Activated CD4-positive, alpha-beta memory T cell treated with anti-CD3 and anti-CD28 coated beads for 36 hours (primary cell): ENCODE measurements at regions of chr14 and their contacts with region 1.

Region 1: GRCh38 chr14:24058260-24058950 is 6.6 kb downstream of the CARMIL3 start:
- DNase-seq: peak; percentile 83
- H3K4me3 Mint-ChIP-seq: no peak overlapping the region
- H3K27ac Mint-ChIP-seq: peak overlapping the region; percentile 4
- H3K4me1 Mint-ChIP-seq: peaks cover 7% of the 10 kb centered on the region
- H3K27me3 Mint-ChIP-seq: peaks cover 4% of the 10 kb centered on the region

Region 2: DNA sequence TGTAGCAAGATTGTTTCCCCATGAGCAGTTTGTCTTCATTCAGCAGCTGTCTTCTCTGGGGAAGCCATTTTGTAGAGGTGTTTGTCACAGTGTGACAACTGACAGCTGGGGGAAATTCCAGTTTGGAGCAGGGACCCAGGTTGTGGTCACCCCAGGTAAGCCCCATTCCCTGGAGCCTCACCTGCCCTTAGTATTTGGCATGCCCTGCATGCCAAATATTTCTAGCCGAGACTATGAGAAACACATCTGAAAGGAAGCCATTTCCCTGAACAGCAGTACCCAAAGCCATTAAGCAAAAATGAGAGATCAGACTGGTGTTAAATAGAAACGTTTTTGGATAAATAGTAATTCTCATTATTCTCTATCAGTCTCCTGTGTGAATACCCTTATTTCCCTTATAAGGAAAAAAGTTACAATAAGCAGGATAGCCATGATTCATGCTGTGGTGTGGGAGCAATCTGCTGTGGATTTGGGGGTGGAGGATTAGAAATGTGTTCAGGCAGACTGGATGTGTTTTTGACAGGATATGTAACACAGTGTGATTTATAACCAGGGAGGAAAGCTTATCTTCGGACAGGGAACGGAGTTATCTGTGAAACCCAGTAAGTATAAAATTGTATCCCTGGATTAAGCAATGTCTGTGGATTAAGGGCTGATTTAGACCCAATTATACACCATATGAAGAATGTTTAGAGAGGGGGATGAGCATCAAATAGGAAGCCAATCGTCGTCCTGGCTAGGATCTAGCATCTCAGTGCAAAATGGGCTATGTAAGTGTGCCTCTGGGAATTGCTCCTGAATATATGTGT is 1538.3 kb before region 1 on chr14:
- CTCF ChIA-PET with region 1: no interaction called
- POLR2A ChIA-PET with region 1: no interaction called
- intact Hi-C with region 1: no loop called
- DNase-seq: no peak
- H3K4me3 Mint-ChIP-seq: peak overlapping the region; percentile 83
- H3K27ac Mint-ChIP-seq: peak overlapping the region; percentile 99
- H3K4me1 Mint-ChIP-seq: peaks cover 88% of the 10 kb centered on the region
- H3K27me3 Mint-ChIP-seq: no peaks in the 10 kb centered on the region

Region 3: GRCh38 chr14:22994762-22995275 is 1063.6 kb before region 1 on chr14:
- CTCF ChIA-PET with region 1: no interaction called
- POLR2A ChIA-PET with region 1: no interaction called
- intact Hi-C with region 1: no loop called
- DNase-seq: peak; percentile 40
- H3K4me3 Mint-ChIP-seq: no peak overlapping the region
- H3K27ac Mint-ChIP-seq: no peak overlapping the region
- H3K4me1 Mint-ChIP-seq: peaks cover 3% of the 10 kb centered on the region
- H3K27me3 Mint-ChIP-seq: no peaks in the 10 kb centered on the region

Region 4: DNA sequence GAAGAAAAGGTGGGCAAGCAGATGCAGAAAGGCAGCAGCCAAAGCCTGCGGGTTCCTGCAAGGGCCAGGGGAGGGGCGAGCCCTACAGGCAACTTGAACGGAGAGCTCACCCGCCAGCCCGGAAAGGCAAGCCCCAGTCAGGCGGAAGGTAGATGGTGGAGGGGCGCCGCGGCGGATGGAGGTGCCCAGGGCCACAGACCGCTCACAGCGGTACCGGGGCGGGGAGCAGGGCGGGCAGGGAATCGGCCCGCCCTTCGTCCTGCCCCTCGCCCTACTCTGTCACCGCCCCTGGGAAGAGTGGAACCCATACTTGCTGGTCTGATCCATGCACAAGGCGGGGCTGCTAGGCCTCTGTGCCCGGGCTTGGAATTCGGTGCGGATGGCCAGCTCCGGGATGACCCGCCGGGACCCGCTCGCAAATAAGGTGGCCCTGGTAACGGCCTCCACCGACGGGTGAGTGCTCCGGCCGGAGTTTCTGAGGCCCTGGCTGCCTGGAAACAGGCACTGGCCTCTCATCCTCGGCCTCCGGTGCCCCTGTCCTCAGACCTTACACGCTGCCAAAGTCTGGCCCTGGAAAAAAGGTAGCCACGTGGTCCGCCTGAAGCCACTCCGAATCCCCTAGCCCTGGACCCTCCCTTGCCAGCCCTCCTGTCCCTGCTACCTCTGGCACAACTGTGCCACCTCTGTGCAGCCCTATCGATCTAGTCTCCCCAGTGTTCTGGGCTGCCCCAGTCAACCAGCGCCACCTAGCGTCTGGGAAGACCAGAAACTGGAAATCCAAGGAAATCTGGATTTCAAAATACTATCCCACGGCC is 104.7 kb before region 1 on chr14 and contains the start of gene DHRS4:
- CTCF ChIA-PET with region 1: no interaction called
- POLR2A ChIA-PET with region 1: no interaction called
- intact Hi-C with region 1: no loop called
- DNase-seq: peak; percentile 87
- H3K4me3 Mint-ChIP-seq: peak within 1 kb of the TSS; percentile 100
- H3K27ac Mint-ChIP-seq: peak within 1 kb of the TSS; percentile 88
- H3K4me1 Mint-ChIP-seq: peaks cover 28% of the 10 kb centered on the region
- H3K27me3 Mint-ChIP-seq: no peaks in the 10 kb centered on the region
- total RNA-seq, gene DHRS4: 25.7 to 27.0 TPM

Region 5: DNA sequence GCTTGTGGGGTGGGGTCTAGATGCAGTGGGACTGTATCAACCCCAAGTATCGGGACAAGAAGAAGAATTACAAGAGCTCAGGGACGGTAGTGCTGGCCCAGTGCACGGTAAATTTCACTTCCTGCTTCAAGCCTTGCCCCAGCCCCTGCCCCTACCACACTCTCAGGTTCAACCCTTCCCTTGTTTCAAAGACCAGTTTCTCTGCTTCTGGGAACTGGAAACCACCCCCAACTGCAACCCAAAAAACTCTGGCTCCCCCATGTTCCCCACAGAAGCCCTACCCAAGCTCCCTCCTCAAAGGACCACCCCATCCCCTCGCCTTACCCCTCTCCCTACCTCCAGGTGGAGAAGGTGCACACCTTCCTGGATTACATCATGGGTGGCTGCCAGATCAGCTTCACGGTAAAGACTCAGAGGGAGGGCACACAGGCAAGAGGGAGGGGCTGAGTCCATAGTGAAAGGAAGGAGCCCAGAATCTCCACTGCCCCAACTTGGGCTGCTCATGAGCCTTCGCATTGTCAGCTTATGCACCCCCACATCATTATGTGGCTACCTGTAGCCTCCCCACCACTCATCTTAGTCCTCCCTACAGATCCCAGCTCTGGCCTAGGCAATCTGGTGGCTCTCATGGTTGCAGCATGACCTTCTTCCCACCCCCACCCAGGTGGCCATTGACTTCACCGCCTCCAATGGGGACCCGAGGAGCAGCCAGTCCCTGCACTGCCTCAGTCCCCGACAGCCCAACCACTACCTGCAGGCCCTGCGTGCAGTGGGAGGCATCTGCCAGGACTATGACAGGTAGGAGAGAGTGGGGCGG is 17.3 kb after region 1 on chr14:
- CTCF ChIA-PET with region 1: interaction called, 50 read pairs
- POLR2A ChIA-PET with region 1: interaction called, 3 read pairs
- intact Hi-C with region 1: no loop called
- DNase-seq: no peak
- H3K4me3 Mint-ChIP-seq: no peak overlapping the region
- H3K27ac Mint-ChIP-seq: no peak overlapping the region
- H3K4me1 Mint-ChIP-seq: peaks cover 18% of the 10 kb centered on the region
- H3K27me3 Mint-ChIP-seq: no peaks in the 10 kb centered on the region

Region 6: DNA sequence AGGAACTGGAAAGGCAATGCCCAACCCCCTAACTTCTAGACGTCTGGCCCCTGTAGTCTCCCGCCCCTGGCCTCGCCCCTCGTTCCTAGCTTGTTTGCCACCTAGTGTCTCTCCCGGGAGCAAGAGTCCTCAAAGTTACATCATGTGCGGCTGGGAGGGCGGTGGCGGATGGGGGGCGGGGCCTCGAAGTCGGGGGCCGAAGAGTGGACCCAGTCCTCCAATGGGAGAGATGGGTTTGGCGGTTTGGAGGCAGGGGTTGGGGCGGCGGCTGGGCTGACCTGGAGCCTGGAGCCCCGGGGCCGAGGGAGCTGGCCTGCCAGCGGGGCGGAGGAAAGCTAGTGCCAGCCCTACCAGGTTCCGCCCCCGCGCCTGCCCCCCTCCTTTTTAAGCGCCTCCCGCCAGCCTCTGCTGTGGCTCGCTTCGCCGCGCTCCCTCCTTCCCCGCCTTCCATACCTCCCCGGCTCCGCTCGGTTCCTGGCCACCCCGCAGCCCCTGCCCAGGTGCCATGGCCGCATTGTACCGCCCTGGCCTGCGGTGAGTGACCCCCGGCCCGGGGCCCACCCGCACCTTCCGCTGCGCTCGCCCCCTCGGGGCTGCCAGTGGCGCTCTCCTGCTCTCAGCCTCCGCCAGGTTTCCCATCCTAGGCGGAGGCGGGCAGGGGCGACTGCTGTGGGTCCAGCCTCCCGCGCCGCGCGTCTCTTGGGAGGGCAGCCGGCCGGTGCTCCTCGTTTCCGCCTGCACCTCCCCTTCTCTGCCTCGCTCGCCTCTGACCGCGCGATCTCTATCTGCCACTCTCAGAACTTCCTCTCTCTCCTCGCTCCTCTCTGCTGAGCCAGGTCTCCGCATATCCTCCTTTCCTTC is 35.7 kb after region 1 on chr14 and contains the start of gene PCK2:
- CTCF ChIA-PET with region 1: interaction called, 458 read pairs
- POLR2A ChIA-PET with region 1: interaction called, 28 read pairs
- intact Hi-C with region 1: loop called (anchors 1 kb)
- DNase-seq: peak; percentile 94
- H3K4me3 Mint-ChIP-seq: peak within 1 kb of the TSS; percentile 94
- H3K27ac Mint-ChIP-seq: peak within 1 kb of the TSS; percentile 97
- H3K4me1 Mint-ChIP-seq: peaks cover 28% of the 10 kb centered on the region
- H3K27me3 Mint-ChIP-seq: no peaks in the 10 kb centered on the region
- total RNA-seq, gene PCK2: 118 to 125 TPM

Region 7: DNA sequence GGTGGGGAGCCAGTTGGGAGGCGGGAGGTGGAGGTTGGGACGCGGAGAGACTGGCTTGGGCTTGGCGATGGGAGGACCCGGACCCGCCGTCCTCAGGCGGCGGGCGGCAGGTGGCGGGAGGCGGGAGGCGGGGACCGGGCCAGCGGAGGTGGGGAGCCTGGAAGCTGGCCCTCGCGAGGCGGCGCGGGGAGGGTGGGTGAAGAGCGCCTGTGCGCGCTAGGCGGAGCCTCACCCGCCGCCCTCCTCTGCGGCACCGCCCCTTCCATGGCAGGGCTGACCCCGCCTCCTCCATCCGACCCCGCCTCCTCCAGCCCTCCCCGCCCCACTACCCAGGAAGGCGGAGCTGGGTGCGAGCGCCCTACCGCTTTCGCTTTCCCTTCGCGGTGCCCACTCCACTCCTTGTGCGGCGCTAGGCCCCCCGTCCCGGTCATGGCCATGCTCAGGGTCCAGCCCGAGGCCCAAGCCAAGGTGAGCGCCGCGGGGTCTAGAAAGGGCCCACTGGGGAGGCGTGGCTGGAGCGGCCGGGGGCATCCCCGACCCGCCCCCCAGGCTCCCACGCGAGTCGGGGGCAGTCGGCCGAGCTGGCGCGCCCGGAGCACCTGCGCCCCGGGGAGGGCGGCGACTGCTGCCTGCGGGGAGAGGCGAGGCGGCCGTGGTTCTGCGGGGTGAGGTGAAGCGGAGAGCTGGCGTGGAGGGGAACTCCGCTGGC is 77.6 kb after region 1 on chr14 and contains the start of gene PSME1:
- CTCF ChIA-PET with region 1: interaction called, 15 read pairs
- POLR2A ChIA-PET with region 1: no interaction called
- intact Hi-C with region 1: no loop called
- DNase-seq: peak; percentile 97
- H3K4me3 Mint-ChIP-seq: peak within 1 kb of the TSS; percentile 95
- H3K27ac Mint-ChIP-seq: peak within 1 kb of the TSS; percentile 96
- H3K4me1 Mint-ChIP-seq: peaks cover 54% of the 10 kb centered on the region
- H3K27me3 Mint-ChIP-seq: no peaks in the 10 kb centered on the region
- total RNA-seq, gene PSME1: 403 to 427 TPM

Region 8: DNA sequence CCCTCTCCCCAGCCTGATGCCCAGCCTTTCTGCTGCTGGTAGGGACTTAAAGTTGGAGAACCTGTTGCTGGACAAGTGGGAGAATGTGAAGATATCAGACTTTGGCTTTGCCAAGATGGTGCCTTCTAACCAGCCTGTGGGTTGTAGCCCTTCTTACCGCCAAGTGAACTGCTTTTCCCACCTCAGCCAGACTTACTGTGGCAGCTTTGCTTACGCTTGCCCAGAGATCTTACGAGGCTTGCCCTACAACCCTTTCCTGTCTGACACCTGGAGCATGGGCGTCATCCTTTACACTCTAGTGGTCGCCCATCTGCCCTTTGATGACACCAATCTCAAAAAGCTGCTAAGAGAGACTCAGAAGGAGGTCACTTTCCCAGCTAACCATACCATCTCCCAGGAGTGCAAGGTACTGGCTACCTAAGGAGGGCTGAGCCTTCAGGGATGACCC is 148.7 kb after region 1 on chr14:
- CTCF ChIA-PET with region 1: no interaction called
- POLR2A ChIA-PET with region 1: no interaction called
- intact Hi-C with region 1: no loop called
- DNase-seq: no peak
- H3K4me3 Mint-ChIP-seq: no peak overlapping the region
- H3K27ac Mint-ChIP-seq: peak overlapping the region; percentile 5
- H3K4me1 Mint-ChIP-seq: peaks cover 31% of the 10 kb centered on the region
- H3K27me3 Mint-ChIP-seq: no peaks in the 10 kb centered on the region